ENCODE measurements at regions of chr6 and their contacts with region 1.

Region 1: DNA sequence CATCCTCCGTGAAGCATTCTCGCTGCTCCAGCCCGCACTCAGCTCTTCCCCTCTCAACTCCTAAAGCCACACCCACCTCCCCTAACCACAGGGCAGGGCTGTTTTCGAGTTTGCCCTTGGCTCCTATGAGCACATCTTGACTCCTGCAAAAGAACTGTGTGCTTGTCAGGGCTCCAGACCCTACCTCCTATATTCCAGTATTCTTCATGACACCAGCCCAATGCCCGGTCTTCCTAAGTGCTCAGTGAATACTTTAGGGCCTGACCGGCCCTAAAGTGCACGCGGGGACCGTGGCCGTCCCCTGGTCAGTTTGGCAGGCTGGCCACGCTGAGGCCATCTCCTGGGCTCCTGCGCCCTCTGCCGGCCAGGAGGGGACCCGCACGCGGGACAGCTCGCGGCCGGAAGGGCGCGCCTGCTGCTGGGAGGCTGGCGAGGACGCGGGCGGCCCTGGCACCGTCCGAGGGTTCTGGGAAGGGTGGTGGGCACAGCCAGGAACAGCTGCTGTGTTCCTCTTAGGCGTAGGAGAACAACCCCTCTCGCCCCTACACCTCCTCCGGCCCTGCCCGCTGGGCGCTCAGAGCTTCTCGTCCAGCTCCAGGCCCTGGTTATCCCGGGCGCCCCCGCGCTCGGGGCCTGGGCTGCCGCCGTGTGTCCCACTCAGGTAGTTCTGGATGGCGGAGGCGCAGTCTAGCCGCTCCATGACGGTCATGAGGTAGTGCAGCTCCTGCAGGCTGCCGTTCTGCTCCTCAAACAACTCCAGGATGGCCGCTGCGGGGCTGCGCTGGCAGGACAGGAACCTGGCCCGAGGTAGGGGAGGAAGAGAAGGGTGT is 11.0 kb downstream of the UNC5CL start:
- DNase-seq: peak; percentile 93
- ATAC-seq: peak; percentile 80
- H3K4me3 Mint-ChIP-seq: peak overlapping the region; percentile 97
- H3K27ac Mint-ChIP-seq: peak overlapping the region; percentile 85
- H3K4me1 Mint-ChIP-seq: peaks cover 20% of the 10 kb centered on the region
- H3K27me3 Mint-ChIP-seq: no peaks in the 10 kb centered on the region

Region 2: DNA sequence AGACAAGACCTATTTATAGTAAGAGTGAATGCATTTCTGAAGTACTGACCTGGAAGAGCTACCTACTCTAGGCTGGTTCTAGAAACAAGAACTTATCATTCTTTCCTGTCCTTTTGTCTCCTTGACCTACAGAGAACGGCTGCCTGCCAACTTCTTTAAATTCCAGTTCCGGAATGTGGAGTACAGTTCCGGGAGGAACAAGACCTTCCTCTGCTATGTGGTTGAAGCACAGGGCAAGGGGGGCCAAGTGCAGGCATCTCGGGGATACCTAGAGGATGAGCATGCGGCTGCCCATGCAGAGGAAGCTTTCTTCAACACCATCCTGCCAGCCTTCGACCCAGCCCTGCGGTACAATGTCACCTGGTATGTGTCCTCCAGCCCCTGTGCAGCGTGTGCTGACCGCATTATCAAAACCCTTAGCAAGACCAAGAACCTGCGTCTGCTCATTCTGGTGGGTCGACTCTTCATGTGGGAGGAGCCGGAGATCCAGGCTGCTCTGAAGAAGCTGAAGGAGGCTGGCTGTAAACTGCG is 33.2 kb after region 1 on chr6:
- POLR2A ChIA-PET with region 1: no interaction called
- DNase-seq: no peak
- ATAC-seq: no peak
- H3K4me3 Mint-ChIP-seq: no peak overlapping the region
- H3K27ac Mint-ChIP-seq: no peak overlapping the region
- H3K4me1 Mint-ChIP-seq: peaks cover 8% of the 10 kb centered on the region
- H3K27me3 Mint-ChIP-seq: no peaks in the 10 kb centered on the region

Region 3: DNA sequence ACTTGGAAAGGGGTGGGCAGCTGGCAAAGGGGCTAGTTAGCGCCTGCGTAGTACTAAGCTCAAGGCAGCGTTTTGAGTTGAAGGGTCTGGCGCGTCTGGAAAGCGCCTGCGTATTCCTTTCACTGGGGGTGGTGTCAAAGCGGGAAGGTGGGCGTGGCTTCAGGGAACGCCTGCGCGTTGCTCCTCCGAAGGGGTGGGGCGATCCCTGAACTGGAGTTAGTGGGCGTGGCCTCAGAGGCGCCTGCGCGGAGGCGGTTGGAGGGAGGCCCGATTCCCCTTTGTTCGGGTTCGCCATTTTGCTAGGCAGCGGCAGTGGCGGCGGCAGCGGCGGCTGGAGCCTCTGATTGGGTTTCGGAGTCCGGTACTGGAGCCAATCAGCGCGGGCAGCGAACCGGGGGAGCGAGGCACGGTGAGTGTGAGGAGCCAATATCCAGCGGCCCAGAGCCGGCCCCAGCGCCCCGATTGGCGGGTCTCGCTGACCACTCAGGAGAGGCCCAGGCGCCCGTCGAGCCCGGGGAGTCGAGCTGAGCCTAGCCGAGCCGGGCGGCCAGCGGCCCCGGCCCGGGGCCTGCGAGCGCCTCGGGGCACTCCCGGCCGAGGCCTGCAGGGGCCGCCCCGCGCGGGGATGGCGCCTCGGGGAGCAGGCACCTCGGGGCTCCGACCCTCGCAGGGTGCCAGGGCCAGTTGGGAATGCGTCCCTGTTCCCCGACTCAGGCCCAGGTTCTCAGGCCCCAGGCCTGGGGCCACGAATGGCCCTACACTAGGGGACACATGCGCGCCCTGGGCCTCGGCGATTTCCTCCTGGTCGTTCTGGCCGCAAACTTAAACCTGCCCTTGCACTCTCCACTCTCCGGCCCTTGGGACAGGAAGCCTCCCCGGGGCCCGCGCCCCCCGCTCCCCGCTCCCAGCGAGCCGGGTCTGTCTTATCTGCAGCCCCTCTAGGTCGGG is 44.9 kb after region 1 on chr6 and contains the start of gene NFYA:
- POLR2A ChIA-PET with region 1: interaction called, 10 read pairs
- DNase-seq: peak; percentile 100
- ATAC-seq: peak; percentile 77
- H3K4me3 Mint-ChIP-seq: peak within 1 kb of the TSS; percentile 97
- H3K27ac Mint-ChIP-seq: peak within 1 kb of the TSS; percentile 99
- H3K4me1 Mint-ChIP-seq: peaks cover 43% of the 10 kb centered on the region
- H3K27me3 Mint-ChIP-seq: no peaks in the 10 kb centered on the region
- total RNA-seq, gene NFYA: 44.4 to 47.7 TPM

Measured in activated naive CD8-positive, alpha-beta T cell treated with anti-CD3 and anti-CD28 coated beads, Interleukin-2, amount 10 ng/mL, durations not matched to agents 7 days and 5 days (primary cell).